ENCODE measurements at regions of chr3 and their contacts with region 1.

Region 1: DNA sequence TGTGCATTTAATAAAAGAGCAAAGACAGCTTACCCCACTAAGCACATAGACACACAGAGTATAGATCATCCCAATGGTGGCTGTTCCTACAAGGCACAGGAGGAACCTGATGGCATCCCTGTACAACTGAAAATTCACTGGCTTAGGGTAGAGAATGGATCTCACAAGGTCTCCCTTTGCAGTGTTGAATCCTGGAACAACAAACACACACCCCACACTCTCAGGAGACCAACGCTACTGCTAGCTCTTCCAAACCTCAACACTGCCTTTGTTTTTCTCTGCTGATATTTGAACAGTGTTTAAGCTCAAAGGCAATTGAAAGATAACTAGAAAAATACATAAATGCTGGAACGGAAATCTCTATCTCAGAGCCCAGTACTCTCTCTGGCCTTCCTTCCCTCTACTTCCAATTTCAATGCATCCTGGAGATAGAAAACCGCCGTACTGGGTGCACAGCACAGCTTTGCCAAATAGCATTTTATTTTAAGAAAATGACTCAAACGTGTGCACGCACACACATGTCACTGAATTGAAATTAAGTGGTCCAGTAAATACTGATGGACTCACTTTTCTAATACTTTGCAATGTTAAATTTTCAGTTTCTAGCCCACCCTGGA is 87.5 kb upstream of the ATP13A5 start:
- DNase-seq: no peak
- H3K4me3 ChIP-seq: no peak overlapping the region
- H3K27ac ChIP-seq: no peak overlapping the region
- H3K4me1 ChIP-seq: no peaks in the 10 kb centered on the region
- H3K27me3 ChIP-seq: no peaks in the 10 kb centered on the region
- CTCF ChIP-seq: no peak
- EP300 ChIP-seq: no peak
- POLR2A ChIP-seq: no peak

Region 2: GRCh38 chr3:193348686-193349085 is 117.4 kb before region 1 on chr3:
- intact Hi-C with region 1: no loop called
- DNase-seq: no peak
- H3K4me3 ChIP-seq: no peak overlapping the region
- H3K27ac ChIP-seq: no peak overlapping the region
- H3K4me1 ChIP-seq: no peaks in the 10 kb centered on the region
- H3K27me3 ChIP-seq: no peaks in the 10 kb centered on the region
- CTCF ChIP-seq: no peak
- EP300 ChIP-seq: no peak
- POLR2A ChIP-seq: no peak

Region 3: GRCh38 chr3:193439423-193439822 is 26.7 kb before region 1 on chr3:
- intact Hi-C with region 1: loop called in 1 of 4 experiments (anchors 1 kb)
- DNase-seq: no peak
- H3K4me3 ChIP-seq: no peak overlapping the region
- H3K27ac ChIP-seq: no peak overlapping the region
- H3K4me1 ChIP-seq: no peaks in the 10 kb centered on the region
- H3K27me3 ChIP-seq: no peaks in the 10 kb centered on the region
- CTCF ChIP-seq: no peak
- EP300 ChIP-seq: no peak
- POLR2A ChIP-seq: no peak